ENCODE measurements at regions of chr2 and their contacts with region 1.

Region 1: GRCh38 chr2:157261199-157261783 is 3.8 kb downstream of the GALNT5 start:
- DNase-seq: peak; percentile 12
- H3K4me3 Mint-ChIP-seq: peak overlapping the region; percentile 57
- H3K27ac Mint-ChIP-seq: peak overlapping the region; percentile 86
- H3K4me1 Mint-ChIP-seq: peaks cover 37% of the 10 kb centered on the region
- H3K27me3 Mint-ChIP-seq: peaks cover 2% of the 10 kb centered on the region

Region 2: GRCh38 chr2:156017341-156017885 is 1243.9 kb before region 1 on chr2:
- intact Hi-C with region 1: no loop called
- DNase-seq: no peak
- H3K4me3 Mint-ChIP-seq: no peak overlapping the region
- H3K27ac Mint-ChIP-seq: no peak overlapping the region
- H3K4me1 Mint-ChIP-seq: no peaks in the 10 kb centered on the region
- H3K27me3 Mint-ChIP-seq: no peaks in the 10 kb centered on the region

Region 3: DNA sequence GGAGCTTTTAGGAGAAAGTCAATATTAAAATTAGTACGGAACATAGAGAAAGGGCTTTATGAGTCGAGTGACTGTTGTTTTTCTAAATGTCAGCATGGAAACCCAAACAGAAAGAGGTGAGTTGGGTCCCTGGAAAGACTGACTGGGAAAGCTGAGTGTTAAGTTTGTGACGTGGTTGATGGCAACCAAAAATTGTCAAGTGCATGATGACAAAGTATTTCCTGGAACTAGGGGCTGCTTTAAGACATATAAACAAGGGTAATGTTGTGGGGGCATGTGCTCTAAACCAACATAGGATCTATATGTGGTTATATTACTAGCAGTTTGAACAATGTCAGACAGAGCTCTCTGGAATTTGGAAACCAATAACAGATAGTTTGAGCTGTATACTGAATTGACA is 876.0 kb before region 1 on chr2:
- intact Hi-C with region 1: loop called (anchors 5 kb)
- DNase-seq: no peak
- H3K4me3 Mint-ChIP-seq: no peak overlapping the region
- H3K27ac Mint-ChIP-seq: peak overlapping the region; percentile 75
- H3K4me1 Mint-ChIP-seq: peaks cover 37% of the 10 kb centered on the region
- H3K27me3 Mint-ChIP-seq: peaks cover 4% of the 10 kb centered on the region

Region 4: GRCh38 chr2:157245846-157246764 is 15.2 kb before region 1 on chr2:
- intact Hi-C with region 1: loop called (anchors 1 kb)
- DNase-seq: no peak
- H3K4me3 Mint-ChIP-seq: no peak overlapping the region
- H3K27ac Mint-ChIP-seq: no peak overlapping the region
- H3K4me1 Mint-ChIP-seq: peaks cover 15% of the 10 kb centered on the region
- H3K27me3 Mint-ChIP-seq: peaks cover 1% of the 10 kb centered on the region

Region 5: DNA sequence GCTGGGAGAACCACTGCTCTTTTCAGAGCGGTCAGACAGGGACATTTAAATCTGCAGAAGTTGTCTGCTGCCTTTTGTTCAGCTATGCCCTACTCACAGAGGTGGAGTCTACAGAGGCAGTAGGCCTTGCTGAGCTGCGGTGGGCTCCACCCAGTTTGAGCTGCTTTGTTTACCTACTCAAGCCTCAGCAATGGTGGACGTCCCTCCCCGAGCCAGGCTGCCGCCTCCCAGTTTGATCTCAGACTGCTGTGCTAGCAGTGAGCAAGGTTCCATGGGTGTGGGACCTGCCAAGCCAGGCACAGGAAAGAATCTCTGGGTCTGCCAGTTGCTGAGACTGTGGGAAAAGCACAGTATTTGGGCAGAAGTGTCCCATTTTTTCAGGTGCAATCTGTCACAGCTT is 18.0 kb after region 1 on chr2:
- intact Hi-C with region 1: no loop called
- DNase-seq: no peak
- H3K4me3 Mint-ChIP-seq: no peak overlapping the region
- H3K27ac Mint-ChIP-seq: no peak overlapping the region
- H3K4me1 Mint-ChIP-seq: no peaks in the 10 kb centered on the region
- H3K27me3 Mint-ChIP-seq: peaks cover 13% of the 10 kb centered on the region

Region 6: GRCh38 chr2:157404363-157404762 is 143.1 kb after region 1 on chr2:
- intact Hi-C with region 1: loop called (anchors 2 kb)
- DNase-seq: peak; percentile 62
- H3K4me3 Mint-ChIP-seq: peak overlapping the region; percentile 37
- H3K27ac Mint-ChIP-seq: peak overlapping the region; percentile 86
- H3K4me1 Mint-ChIP-seq: peaks cover 72% of the 10 kb centered on the region
- H3K27me3 Mint-ChIP-seq: no peaks in the 10 kb centered on the region

Region 7: GRCh38 chr2:157413326-157414035 is 152.2 kb after region 1 on chr2:
- intact Hi-C with region 1: loop called (anchors 2 kb)
- DNase-seq: peak; percentile 60
- H3K4me3 Mint-ChIP-seq: peak overlapping the region; percentile 82
- H3K27ac Mint-ChIP-seq: peak overlapping the region; percentile 91
- H3K4me1 Mint-ChIP-seq: peaks cover 84% of the 10 kb centered on the region
- H3K27me3 Mint-ChIP-seq: no peaks in the 10 kb centered on the region